ENCODE measurements at regions of chr2 and their contacts with region 1.

Region 1: DNA sequence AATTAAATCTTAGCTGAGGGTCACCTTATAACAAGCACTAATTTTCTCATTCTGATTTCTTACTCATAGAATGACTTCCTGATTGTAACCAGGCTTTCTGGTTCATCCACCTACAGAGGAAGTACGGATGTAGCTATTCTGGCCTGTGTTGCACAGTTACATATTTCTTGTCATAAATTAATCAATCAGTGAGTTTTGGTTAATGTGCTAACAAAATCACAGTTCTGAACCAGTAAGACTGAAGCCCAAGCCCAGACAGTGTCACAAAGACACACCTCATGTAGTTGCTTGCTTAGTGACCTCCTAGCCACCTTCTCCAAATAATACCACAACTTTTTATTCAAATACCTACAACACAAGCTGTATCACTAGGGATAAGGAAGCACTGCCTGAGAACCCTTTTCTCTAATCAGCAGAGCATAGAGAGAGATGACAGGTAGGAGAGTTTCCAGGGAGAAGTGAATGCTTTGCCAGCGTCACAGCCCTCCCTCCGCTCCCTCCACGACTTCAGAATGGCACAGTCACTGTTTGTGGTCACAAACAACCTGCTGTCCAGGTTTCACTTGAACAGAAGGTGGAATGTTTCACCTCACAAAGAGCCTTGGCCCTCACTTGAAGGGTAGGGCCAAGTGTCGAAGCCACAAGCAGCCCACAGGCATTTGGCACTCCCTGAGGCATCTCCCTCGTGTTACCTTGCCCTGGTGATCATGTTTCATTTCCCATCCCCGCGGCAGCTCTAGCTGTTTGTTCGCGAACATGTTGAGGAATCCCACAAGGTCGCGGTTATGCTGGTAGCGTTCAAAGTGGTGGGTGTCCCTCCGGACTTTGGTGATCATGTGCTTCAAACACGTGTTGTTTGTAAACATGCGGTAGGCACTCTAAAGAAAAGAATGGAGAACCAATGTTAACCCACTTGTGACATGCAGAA is 120.8 kb upstream of the STK17B start:
- DNase-seq: no peak
- H3K4me3 ChIP-seq: no peak overlapping the region
- H3K27ac ChIP-seq: no peak overlapping the region
- H3K4me1 ChIP-seq: peaks cover 12% of the 10 kb centered on the region
- CTCF ChIP-seq: no peak

Region 2: GRCh38 chr2:196453613-196454047 is 161.5 kb after region 1 on chr2:
- CTCF ChIA-PET with region 1: no interaction called
- POLR2A ChIA-PET with region 1: interaction called, 3 read pairs
- intact Hi-C with region 1: loop called (anchors 5 kb)
- DNase-seq: peak; percentile 47
- H3K4me3 ChIP-seq: no peak overlapping the region
- H3K27ac ChIP-seq: no peak overlapping the region
- H3K4me1 ChIP-seq: no peaks in the 10 kb centered on the region
- CTCF ChIP-seq: peak; percentile 85

Region 3: DNA sequence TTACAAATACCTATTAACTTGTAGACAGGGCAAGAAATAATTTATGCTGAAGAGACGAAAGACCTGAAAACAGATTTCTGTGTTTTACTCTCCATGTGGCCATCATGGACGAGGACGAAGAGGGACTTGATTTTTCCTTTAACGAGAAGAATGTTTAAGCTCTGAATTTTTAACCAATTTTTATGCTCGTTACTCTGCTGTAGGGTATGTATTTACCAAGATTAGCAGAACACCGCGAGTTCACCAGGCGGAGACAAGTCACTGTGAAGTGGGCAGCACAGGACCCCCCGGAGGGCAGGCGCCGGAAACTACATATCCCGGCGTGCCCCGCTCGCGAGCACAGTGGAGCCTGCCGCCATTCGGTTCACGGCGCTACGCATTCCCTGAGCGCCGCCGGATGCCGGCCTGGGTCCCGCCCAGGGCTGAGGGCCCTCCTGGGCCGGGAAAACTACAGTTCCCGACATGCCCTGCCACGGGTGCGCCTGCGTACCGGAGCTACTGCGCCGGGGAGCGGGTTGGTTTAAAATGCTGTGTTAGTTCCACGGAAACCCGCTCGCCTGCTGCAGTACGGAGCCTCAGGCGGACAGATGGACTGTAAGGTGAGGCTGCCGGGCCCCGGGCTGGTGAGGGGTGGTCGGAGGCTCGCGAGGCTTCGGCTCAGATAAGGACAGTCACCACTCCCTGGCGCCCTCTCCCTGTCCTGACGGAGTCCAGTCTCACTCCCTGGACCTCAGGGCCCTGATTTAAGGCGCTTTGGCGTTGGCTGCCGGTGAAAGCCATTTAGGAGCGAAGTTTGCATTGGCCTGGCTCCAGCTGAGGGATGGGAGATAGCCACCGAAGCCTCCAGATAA is 347.3 kb after region 1 on chr2 and contains the start of gene CCDC150:
- CTCF ChIA-PET with region 1: no interaction called
- POLR2A ChIA-PET with region 1: no interaction called
- intact Hi-C with region 1: loop called (anchors 10 kb)
- DNase-seq: peak; percentile 96
- H3K4me3 ChIP-seq: peak within 1 kb of the TSS; percentile 95
- H3K27ac ChIP-seq: no peak within 1 kb of the TSS
- H3K4me1 ChIP-seq: peaks cover 11% of the 10 kb centered on the region
- CTCF ChIP-seq: 0 out of 2 replicates have a peak, but pooled peaks have one; percentile 19
- total RNA-seq, gene CCDC150: 39.5 and 40.8 TPM in 2 replicates

Region 4: DNA sequence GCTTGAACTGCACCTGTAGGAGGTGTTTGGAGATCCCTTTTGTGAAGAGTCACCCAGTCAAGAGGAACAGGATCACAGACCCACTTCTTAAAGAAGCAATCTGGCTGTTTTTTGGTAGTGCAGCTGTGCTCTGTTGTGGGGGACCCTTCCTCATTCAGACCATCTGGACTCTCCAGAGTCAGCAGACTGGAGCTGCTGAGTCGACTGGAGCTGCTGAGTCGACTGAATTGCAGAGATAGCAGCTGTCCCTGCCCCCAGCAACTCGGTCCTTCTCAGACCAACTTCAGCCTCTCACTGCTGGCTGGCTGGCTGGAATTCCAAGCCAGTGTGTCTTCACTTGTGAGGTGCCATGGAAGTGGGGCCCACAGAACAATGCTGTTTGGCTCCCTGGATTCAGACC is 450.5 kb after region 1 on chr2:
- CTCF ChIA-PET with region 1: no interaction called
- POLR2A ChIA-PET with region 1: no interaction called
- intact Hi-C with region 1: no loop called
- DNase-seq: no peak
- H3K4me3 ChIP-seq: no peak overlapping the region
- H3K27ac ChIP-seq: no peak overlapping the region
- H3K4me1 ChIP-seq: no peaks in the 10 kb centered on the region
- CTCF ChIP-seq: no peak